Activated CD4-positive, alpha-beta T cell treated with anti-CD3 and anti-CD28 coated beads for 36 hours (primary cell): ENCODE measurements at regions of chr20 and their contacts with region 1.

Region 1: GRCh38 chr20:44217342-44218092 is 6.9 kb upstream of the OSER1 start:
- DNase-seq: peak; percentile 82
- ATAC-seq: peak; percentile 46
- H3K4me3 Mint-ChIP-seq: peak overlapping the region; percentile 65
- H3K27ac Mint-ChIP-seq: peak overlapping the region; percentile 83
- H3K4me1 Mint-ChIP-seq: peaks cover 50% of the 10 kb centered on the region
- H3K27me3 Mint-ChIP-seq: no peaks in the 10 kb centered on the region

Region 2: GRCh38 chr20:44326391-44327159 is 109.1 kb after region 1 on chr20:
- CTCF ChIA-PET with region 1: interaction called, 12 read pairs
- POLR2A ChIA-PET with region 1: interaction called, 3 read pairs
- intact Hi-C with region 1: no loop called
- DNase-seq: peak; percentile 56
- ATAC-seq: peak; percentile 64
- H3K4me3 Mint-ChIP-seq: no peak overlapping the region
- H3K27ac Mint-ChIP-seq: no peak overlapping the region
- H3K4me1 Mint-ChIP-seq: no peaks in the 10 kb centered on the region
- H3K27me3 Mint-ChIP-seq: peaks cover 7% of the 10 kb centered on the region

Region 3: GRCh38 chr20:44460795-44461141 is 243.3 kb after region 1 on chr20:
- CTCF ChIA-PET with region 1: interaction called, 3 read pairs
- POLR2A ChIA-PET with region 1: no interaction called
- intact Hi-C with region 1: loop called (anchors 2 to 5 kb)
- DNase-seq: no peak
- ATAC-seq: peak; percentile 47
- H3K4me3 Mint-ChIP-seq: no peak overlapping the region
- H3K27ac Mint-ChIP-seq: no peak overlapping the region
- H3K4me1 Mint-ChIP-seq: no peaks in the 10 kb centered on the region
- H3K27me3 Mint-ChIP-seq: no peaks in the 10 kb centered on the region

Region 4: DNA sequence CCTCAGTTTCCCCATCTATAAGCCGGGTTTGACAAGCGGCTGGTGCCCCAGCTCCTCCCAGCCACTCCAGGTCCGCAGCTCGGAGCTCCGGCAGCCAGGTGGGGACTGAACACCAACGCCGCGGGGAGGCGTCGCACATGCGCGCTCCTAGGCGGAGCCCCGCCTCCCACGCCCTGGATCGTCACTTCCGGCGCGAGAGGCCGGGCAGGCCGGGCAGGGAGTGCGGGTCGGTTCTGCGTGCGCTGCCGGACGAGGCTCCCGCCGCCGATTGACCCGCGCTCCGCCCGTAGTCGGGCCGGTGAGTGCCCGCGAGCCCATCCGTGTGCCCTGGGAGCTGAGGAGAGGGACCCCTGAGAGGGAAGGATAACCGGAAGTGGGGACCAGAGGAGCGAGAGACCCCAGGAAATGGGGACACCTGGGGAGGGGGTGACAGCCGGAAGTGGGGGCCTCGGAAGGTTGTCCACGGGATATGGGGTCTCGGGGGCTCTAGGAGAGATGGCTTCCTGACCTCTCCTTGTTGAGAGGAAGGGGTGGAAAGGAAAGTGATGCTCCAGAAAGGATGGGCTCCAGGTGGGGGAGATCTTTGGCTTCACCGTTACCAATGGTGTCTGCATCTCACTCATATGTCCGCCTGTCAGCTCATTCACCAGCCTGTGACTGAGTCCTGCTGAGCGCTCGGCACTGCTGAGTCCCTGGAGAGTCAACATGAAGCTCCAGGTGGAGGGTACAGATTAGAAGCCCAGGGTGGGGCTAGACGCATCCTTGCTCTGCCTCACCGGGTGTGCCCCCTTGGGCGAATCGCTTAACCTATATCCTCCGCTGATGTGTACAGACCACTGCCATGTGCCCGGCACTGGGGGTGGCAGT is 258.4 kb after region 1 on chr20 and contains the start of gene TTPAL:
- CTCF ChIA-PET with region 1: interaction called, 4 read pairs
- POLR2A ChIA-PET with region 1: no interaction called
- intact Hi-C with region 1: loop called in 1 of 2 experiments (anchors 5 kb)
- DNase-seq: peak; percentile 96
- ATAC-seq: peak; percentile 97
- H3K4me3 Mint-ChIP-seq: peak within 1 kb of the TSS; percentile 91
- H3K27ac Mint-ChIP-seq: peak within 1 kb of the TSS; percentile 97
- H3K4me1 Mint-ChIP-seq: peaks cover 22% of the 10 kb centered on the region
- H3K27me3 Mint-ChIP-seq: no peaks in the 10 kb centered on the region
- total RNA-seq, gene TTPAL: 18.3 to 21.5 TPM

Region 5: DNA sequence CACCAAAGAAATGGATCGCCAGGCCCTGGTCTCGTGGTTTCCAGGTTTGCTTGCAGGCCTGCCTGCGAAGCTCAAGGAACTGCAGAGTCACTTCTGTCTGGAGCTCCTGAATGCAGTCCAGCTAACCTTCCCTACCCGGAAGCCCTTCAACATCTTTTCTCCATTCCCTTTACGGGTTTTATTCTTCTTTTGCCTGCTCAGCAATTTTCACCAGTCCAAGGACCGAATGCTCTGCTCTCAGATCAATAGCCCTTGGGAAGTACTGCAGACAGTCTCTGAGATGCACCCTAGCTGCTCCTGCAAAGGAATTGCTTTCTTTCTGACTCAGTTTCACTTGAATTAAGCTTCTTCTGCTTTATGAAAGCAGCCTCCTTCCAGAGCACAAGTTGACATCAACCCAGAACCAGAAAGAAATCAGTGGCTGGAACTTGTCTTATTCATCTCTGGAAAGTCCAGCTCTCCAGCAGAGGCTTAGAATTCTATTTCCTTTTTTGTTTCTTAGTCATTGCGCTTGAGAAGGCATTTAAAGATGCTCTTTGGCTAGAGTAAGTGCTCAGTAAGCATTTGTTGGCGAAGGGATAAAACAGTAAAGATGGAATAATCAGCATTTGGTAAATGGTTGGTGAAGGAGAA is 649.3 kb after region 1 on chr20:
- CTCF ChIA-PET with region 1: interaction called, 5 read pairs
- POLR2A ChIA-PET with region 1: no interaction called
- intact Hi-C with region 1: loop called in 1 of 2 experiments (anchors 2 kb)
- DNase-seq: no peak
- ATAC-seq: peak; percentile 23
- H3K4me3 Mint-ChIP-seq: peak overlapping the region; percentile 57
- H3K27ac Mint-ChIP-seq: no peak overlapping the region
- H3K4me1 Mint-ChIP-seq: peaks cover 13% of the 10 kb centered on the region
- H3K27me3 Mint-ChIP-seq: peaks cover 7% of the 10 kb centered on the region